ENCODE measurements at regions of chrX and their contacts with region 1.

Region 1: GRCh38 chrX:129613596-129613995 is 41.2 kb downstream of the APLN start:
- DNase-seq: no peak
- H3K4me3 ChIP-seq: no peak overlapping the region
- H3K27ac ChIP-seq: no peak overlapping the region
- H3K4me1 ChIP-seq: no peaks in the 10 kb centered on the region
- H3K27me3 ChIP-seq: no peaks in the 10 kb centered on the region
- CTCF ChIP-seq: no peak
- POLR2A ChIP-seq: no peak

Region 2: DNA sequence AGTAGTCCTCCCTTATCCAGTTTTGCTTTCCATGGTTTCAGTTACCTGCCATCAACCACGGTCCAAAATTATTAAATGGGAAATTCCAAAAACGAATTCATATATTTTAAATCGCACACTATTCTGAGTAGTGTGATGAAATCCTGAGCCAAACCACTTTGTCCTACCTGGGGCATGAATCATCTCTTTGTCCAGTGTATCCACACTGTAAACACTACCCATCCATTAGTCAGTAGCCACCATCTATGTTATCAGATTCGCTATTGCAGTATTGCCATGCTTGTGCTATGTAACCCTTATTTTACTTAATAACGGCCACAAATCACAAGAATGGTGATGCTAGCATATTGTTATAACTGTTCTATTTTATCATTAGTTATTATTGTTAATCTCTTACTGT is 794.9 kb before region 1 on chrX:
- intact Hi-C with region 1: no loop called
- DNase-seq: no peak
- H3K4me3 ChIP-seq: no peak overlapping the region
- H3K27ac ChIP-seq: no peak overlapping the region
- H3K4me1 ChIP-seq: no peaks in the 10 kb centered on the region
- H3K27me3 ChIP-seq: no peaks in the 10 kb centered on the region
- CTCF ChIP-seq: no peak
- POLR2A ChIP-seq: no peak

Region 3: DNA sequence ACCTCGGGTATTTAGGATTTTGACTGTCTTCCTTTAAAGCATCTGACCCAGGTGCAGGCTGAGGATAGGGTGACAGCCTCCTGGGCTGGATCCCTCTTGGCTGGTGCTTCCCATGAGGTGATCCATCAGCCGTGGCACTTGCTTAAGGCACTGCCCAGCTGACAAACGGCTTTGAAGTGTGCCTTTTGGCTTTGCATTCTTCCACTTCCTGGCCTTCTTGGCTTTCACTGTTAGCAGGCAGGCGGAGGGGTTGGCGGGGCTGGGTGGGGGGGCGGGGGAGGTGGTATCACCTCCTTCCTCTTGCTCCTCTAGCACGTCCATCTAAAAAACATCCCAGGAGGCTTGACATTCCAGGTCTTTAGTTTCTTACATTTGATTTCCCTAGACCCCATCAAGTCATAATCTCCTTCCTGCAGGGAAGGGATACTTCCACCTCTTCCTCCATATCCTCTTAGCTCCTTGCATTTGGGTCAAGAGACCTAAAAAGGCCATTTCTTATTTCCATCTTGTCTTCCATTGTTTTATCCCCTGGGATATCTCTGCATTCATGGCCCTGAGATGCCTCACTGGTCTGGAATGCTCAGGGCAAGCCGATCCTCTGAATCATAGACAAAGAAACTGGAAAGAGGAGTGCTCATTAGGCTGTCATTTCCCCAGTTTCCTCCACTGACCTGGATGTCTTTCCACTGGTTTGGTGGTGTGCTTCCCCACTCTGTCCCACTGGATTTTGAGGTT is 52.5 kb after region 1 on chrX:
- intact Hi-C with region 1: no loop called
- DNase-seq: no peak
- H3K4me3 ChIP-seq: no peak overlapping the region
- H3K27ac ChIP-seq: no peak overlapping the region
- H3K4me1 ChIP-seq: no peaks in the 10 kb centered on the region
- H3K27me3 ChIP-seq: peaks cover 0 to 6% (median 0%) of the 10 kb centered on the region in 7 donors
- CTCF ChIP-seq: no peak
- POLR2A ChIP-seq: no peak

Region 4: GRCh38 chrX:129748305-129748704 is 134.7 kb after region 1 on chrX:
- intact Hi-C with region 1: no loop called
- DNase-seq: no peak
- H3K4me3 ChIP-seq: no peak overlapping the region
- H3K27ac ChIP-seq: peak overlapping the region in 4 of 8 donors; percentile 30 to 50 (median 39)
- H3K4me1 ChIP-seq: peaks cover 0 to 4% (median 0%) of the 10 kb centered on the region in 6 donors
- H3K27me3 ChIP-seq: no peaks in the 10 kb centered on the region
- CTCF ChIP-seq: no peak
- POLR2A ChIP-seq: no peak

Region 5: DNA sequence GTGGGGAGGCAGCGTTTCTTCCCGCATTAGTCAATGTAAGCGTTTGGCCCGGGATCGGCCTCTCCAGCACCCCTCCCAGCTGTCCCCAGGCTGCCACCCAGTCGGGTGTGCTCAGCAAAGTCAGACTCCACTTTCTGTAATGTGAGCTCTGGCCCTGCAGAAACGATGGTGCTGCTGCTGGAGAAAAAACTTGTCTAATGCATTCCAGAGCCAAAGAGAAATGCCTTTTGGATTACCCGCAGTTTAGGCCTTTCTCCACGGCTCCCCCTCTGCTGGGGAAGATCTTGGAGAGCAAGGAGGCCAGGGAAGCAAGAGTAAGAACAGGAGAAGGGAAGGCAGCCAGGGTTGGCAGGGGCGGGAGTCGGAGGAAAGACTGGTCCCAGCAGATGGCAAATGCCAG is 441.5 kb after region 1 on chrX:
- intact Hi-C with region 1: loop called (anchors 10 kb)
- DNase-seq: no peak
- H3K4me3 ChIP-seq: no peak overlapping the region
- H3K27ac ChIP-seq: no peak overlapping the region
- H3K4me1 ChIP-seq: peaks cover 0 to 8% (median 4%) of the 10 kb centered on the region in 6 donors
- H3K27me3 ChIP-seq: no peaks in the 10 kb centered on the region
- CTCF ChIP-seq: no peak
- POLR2A ChIP-seq: no peak